GM10248 (cell line): ENCODE measurements at regions of chr5 and their contacts with region 1.

Region 1: DNA sequence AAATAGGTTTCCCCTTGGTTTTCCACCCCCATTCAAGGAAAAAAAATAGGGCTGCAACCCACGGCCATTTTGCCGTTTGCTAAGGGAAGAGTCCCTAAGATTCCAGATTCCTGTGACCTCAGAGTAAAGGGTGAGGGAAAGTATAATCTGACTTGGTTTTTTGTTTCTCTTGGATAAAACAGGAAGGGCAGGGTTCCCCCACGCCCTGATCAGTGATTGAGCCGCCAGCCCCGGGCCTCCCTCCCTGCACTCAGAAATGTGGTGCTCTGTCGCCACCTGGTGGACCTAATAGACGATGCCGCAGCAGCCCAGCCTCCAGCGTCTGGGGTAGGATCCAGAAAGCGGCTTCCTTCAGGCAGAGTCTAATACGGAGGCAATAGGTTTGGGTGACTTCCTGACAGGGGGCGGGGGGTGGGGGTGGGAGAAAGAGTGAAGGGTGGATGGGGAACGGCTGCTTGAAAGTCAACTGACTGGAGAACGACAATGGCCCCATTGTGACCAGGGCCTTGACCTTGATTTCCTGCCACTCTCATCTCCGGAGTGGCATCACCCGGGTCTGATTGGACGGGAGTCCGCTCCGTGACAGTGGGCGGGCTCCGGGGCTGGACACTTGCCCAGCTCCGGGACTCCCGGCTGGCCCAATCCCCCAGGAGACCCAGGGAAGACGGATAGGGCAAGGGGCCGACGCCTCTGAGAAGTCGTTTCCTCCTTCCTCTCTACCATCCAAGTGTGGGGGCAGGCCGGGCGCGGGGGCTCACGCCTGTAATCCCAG is 17.8 kb upstream of the CYSTM1 start:
- DNase-seq: peak; percentile 90
- CTCF ChIP-seq: peak; percentile 91

Region 2: DNA sequence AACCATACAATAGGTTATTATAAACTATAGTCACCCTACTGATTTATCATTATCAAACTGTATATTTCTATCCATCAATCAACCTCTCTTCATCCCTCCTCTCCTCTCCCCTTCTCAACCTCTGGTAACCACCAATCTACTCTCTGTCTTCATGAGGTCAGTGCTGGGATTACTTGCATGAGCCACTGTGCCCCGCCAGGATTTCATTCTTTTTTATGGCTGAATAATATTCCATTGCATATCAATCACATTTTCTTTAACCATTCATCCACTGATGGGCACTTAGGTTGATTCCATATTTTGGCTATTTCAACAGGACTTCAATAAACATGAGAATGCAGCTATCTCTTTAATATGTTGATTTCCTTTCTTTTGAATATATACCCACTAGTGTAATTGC is 54.1 kb before region 1 on chr5:
- CTCF ChIA-PET with region 1: no interaction called
- POLR2A ChIA-PET with region 1: no interaction called
- DNase-seq: no peak
- CTCF ChIP-seq: no peak

Region 3: DNA sequence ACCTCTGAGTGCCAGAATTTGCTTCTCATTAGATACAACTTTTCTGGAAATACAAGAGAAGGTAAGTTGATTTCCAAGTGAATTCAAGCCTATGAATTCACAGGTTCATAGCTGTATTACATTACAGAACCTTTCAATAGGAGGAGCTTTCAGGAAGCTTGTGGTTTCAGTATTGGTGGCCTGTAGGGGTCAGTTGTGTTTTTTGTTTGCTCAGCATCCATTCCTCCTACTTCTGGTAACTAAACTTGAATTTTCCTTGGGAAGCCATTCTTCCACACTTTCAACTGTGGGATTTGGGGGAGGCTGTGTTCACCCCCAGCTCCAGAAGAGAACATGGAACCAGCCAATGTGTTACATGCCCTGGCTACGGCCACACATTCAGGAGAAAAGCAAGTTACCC is 12.2 kb after region 1 on chr5:
- CTCF ChIA-PET with region 1: interaction called, 15 read pairs
- POLR2A ChIA-PET with region 1: no interaction called
- DNase-seq: no peak
- CTCF ChIP-seq: peak; percentile 9

Region 4: GRCh38 chr5:140174465-140175366 is 17.5 kb after region 1 on chr5 and contains the start of gene CYSTM1:
- CTCF ChIA-PET with region 1: interaction called, 15 read pairs
- POLR2A ChIA-PET with region 1: no interaction called
- DNase-seq: peak; percentile 97
- CTCF ChIP-seq: no peak

Region 5: DNA sequence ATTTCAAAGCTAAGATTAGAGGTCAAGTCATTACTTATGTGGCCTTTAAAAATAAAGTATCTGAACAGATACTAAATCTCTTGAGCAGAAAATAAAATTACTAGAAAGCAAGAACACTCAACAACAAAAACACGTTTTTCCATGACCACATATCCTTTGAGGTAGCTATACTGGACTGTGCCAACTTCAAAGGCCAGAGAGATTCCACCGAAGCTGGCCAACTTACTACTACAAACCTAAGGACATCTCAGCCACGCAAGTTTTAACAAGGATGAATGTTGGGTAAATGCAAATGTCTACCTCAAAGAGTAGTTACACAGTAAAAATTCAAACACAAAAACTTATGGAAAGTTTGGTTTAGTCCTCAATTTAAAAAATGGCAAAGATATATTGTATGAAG is 126.8 kb after region 1 on chr5:
- CTCF ChIA-PET with region 1: no interaction called
- POLR2A ChIA-PET with region 1: no interaction called
- DNase-seq: no peak
- CTCF ChIP-seq: no peak